Endothelial cell of umbilical vein (primary cell): ENCODE measurements at regions of chr1 and their contacts with region 1.

Region 1: DNA sequence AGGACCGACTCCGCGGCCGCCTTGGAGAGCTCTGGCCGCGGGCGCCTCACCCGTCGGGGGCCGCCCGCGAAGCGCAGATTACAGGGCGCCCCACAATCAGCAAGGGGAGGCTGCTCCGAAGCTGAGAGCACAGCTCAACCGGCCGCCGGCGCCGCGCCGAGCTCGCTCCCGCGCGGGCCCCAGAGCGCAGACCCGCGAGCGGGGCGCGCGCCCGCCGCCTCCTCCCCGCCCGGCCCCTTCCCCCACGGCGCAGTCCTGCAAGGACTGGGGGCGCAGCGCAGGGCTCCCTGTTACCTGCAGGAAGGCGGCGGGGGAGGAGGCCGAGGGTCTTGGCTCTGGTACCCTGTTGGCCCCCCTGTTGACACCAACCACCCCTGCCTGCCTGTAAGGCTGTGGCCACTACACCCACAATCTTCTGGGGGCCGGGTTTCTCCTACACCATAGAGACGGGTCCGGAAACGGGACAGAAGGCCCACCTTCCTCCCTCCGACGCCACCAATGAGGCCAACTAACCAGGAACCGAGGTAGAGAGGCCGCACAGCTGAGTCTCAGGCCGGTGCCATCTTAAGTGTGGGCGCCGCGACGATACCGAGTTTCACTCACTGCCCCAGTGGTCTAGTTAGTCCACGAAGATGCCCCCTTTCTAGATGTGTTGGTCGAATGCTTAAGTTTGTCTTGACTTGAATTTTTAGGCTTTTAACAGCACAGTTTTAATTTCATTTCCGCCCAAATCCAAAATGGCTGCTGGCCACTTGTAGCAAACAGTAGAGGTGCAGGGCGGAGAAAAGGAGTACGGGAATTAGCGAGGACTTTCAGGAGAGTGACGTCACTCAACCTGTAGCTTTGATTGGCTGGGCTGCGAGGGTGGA is at the start of gene SCYL3:
- DNase-seq: peak; percentile 98
- H3K4me3 ChIP-seq: peak within 1 kb of the TSS; percentile 74 to 94 (median 93)
- H3K27ac ChIP-seq: peak within 1 kb of the TSS; percentile 100
- H3K4me1 ChIP-seq: peaks cover 16% of the 10 kb centered on the region
- H3K27me3 ChIP-seq: peaks cover 11 to 19% of the 10 kb centered on the region in 2 experiments
- CTCF ChIP-seq: no peak
- POLR2A ChIP-seq: peak; percentile 68
- total RNA-seq, gene SCYL3: 5.6 and 6.2 TPM in 2 replicates

Region 2: DNA sequence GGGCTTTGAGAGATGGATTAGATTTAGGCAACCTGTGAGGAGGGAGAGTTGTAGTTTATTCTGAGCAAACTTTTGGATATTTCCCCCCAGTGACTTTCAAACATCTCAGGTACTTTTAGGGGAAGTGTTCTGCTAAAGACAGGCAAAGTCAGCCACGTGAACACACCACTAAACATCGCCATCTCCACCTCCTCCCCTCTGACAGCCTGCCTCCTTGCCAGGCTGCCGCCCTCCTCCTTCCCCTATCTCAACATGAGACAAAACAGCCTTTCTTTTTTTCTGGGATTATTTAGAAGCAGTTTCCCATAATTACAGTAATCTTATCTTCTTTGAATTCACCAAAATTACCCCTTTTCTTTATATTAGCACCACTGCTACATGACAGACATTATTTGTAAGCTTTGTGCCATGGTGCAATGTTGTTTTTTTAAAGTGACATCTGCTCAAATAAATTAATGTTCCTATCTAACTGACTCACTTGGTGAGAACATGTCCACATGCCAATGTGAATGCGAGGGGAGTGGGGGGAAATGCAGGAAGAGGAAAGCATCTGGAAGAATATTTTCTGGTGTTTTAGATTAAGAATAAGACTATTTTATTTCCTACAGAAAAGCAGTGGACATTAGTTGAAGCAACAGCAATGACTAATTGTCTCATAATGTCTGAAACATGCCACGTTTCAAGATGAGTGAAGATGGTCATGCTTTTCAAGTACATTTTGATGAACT is 935.0 kb before region 1 on chr1:
- CTCF ChIA-PET with region 1: no interaction called
- POLR2A ChIA-PET with region 1: no interaction called
- dilution Hi-C with region 1: no loop called
- intact Hi-C with region 1: no loop called
- DNase-seq: peak; percentile 10
- H3K4me3 ChIP-seq: no peak overlapping the region
- H3K27ac ChIP-seq: no peak overlapping the region
- H3K4me1 ChIP-seq: peaks cover 6% of the 10 kb centered on the region
- H3K27me3 ChIP-seq: no peaks in the 10 kb centered on the region
- CTCF ChIP-seq: no peak
- POLR2A ChIP-seq: no peak

Region 3: DNA sequence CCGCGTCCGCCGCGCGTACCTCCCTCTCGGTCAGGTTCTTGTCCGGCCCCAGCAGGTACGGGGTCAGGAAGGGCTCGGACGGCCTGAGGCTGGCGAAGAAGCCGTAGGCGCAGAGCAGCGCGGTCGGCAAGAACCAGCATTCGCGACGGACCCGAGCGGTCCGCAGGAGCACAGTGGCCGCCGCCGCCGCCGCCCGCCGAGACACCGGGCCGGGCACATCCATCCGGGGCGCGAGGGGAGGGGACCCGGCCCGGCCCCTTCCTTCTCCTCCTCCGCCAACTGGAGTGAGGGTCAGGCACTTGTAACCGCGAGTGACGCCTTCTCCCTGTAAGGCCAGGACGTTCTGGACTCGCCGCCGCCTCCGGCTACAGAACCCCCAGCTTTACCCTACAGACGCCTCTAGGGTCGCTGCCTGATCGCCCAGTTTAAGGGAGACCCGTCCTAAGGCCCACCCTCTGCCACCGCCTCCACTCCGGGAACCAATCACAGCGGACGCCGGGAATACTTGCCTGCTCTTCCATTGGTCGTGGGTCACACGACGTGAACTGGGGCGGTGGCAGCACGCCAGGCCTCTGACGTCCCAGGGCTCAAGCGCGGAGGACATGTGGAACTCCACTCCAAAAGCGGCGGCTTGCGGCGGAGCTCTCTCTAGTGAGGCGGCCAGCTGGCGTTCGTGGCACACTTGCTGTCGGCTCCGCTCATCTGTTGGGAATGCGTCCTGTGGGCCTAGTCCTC is 408.0 kb before region 1 on chr1 and contains the start of gene SLC19A2:
- CTCF ChIA-PET with region 1: no interaction called
- POLR2A ChIA-PET with region 1: no interaction called
- dilution Hi-C with region 1: no loop called
- intact Hi-C with region 1: loop called (anchors 2 kb)
- DNase-seq: peak; percentile 99
- H3K4me3 ChIP-seq: peak within 1 kb of the TSS; percentile 37 to 80 (median 78)
- H3K27ac ChIP-seq: peak within 1 kb of the TSS; percentile 96
- H3K4me1 ChIP-seq: peaks cover 31% of the 10 kb centered on the region
- H3K27me3 ChIP-seq: no peaks in the 10 kb centered on the region
- CTCF ChIP-seq: peak in 1 of 2 donors; percentile 31
- POLR2A ChIP-seq: peak; percentile 87
- total RNA-seq, gene SLC19A2: 5.4 and 7.0 TPM in 2 replicates

Region 4: DNA sequence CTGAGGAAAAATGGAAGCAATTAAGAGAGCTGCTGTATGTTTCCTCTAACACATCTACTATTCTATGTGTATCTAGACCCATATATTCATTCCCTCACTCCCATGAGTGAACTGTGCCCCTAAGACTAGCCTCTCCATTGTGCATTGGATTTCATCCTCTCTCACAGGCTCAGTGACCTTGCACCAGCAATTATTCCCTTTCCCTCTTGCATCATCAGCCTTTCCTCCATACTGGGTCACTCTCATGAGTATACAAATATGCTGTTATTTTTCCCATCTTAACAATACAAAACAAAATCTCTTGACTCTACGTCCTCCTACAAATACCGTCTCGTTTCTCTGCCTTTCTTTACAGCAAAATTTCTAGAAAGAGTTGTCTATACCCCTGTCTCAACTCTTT is 69.6 kb before region 1 on chr1:
- CTCF ChIA-PET with region 1: no interaction called
- POLR2A ChIA-PET with region 1: no interaction called
- dilution Hi-C with region 1: no loop called
- intact Hi-C with region 1: no loop called
- DNase-seq: no peak
- H3K4me3 ChIP-seq: no peak overlapping the region
- H3K27ac ChIP-seq: no peak overlapping the region
- H3K4me1 ChIP-seq: no peaks in the 10 kb centered on the region
- H3K27me3 ChIP-seq: no peaks in the 10 kb centered on the region
- CTCF ChIP-seq: no peak
- POLR2A ChIP-seq: no peak

Region 5: DNA sequence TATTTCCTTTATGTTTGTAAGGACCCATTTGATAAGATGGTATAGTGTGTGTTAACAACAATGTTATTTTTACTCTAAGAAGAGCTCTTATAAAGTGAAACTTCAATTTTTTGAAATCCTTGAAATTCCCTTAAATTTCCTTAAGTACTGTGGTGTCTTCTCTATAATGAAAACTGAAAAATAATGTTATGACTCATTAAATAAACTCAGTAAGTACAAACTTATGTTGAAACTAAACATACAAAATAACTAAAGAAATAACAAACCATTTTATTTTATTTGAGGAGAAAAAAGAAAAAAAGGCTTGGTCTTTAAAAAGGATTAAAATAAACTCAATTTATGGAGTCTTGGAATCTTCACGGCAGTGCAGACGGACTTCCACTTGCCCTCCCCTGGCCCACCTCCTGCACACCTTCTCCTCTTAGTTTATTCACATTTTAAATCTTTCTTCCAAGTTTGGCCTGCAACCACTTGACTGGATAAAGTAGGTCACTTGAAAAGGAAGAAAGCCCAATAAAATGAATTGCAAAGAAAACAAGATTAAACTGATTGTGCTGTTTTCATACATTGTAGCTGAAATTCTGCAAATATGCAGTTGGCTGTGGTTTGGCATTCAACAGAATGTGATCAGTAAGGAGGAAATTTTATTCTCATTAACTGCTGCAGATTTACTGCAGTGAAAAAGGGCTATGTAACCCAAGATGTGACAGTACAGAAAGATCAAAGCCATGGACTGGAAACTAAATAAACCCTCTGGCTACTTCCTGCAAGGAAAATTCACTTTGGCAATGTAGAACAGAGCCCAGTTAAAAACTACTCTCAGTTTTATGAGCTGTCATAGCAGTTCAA is 48.5 kb after region 1 on chr1:
- CTCF ChIA-PET with region 1: no interaction called
- POLR2A ChIA-PET with region 1: no interaction called
- dilution Hi-C with region 1: no loop called
- intact Hi-C with region 1: loop called (anchors 5 kb)
- DNase-seq: peak; percentile 68
- H3K4me3 ChIP-seq: no peak overlapping the region
- H3K27ac ChIP-seq: no peak overlapping the region
- H3K4me1 ChIP-seq: peaks cover 6% of the 10 kb centered on the region
- H3K27me3 ChIP-seq: no peaks in the 10 kb centered on the region
- CTCF ChIP-seq: no peak
- POLR2A ChIP-seq: no peak

Region 6: DNA sequence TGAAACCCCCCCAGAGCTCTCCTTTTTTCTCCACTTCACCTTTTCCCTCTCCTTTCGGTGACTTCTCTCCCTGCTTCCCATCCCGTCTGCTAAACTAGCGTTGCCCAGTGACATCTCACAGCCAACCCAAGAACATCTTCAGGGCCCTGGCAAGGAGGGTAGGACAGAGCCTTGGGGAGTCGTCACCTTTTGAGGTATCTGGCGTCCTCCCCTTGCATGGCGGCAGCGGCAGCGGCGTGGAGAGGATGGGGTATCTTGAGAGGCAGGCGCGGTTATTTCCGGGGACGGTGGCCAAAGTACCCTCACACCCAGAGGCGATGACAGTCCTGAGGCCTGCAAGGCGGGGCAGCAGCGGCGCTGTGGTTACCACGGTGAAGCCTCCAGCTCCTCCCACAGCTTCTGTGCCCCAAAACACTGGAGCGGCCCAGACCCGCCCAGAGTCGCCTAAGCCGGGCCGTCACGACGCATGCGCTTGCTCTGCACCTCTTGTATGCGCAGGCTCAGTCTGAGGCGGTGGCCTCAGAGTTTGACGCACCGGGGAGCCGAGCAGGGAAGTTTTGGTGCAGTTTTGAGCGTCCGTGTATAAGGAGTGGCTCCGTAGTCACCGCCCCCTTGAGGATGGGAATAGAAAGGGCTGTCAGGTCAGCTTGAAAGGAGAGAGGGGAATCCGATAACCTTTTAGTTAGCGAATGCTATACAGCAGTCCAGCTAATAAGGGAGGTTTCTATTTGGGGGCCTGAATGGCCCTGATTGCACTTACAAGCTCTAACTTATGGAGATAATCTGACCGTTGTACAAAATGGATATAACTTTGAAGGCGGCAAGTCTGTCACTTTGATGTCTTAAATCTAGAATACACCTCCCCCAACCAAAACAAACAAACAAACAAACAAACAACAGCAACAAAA is 180.8 kb after region 1 on chr1 and contains the start of gene KIFAP3:
- CTCF ChIA-PET with region 1: interaction called, 3 read pairs
- POLR2A ChIA-PET with region 1: no interaction called
- dilution Hi-C with region 1: no loop called
- intact Hi-C with region 1: loop called (anchors 1 kb)
- DNase-seq: peak; percentile 98
- H3K4me3 ChIP-seq: peak within 1 kb of the TSS; percentile 41 to 77 (median 65)
- H3K27ac ChIP-seq: peak within 1 kb of the TSS; percentile 2
- H3K4me1 ChIP-seq: peaks cover 7% of the 10 kb centered on the region
- H3K27me3 ChIP-seq: no peaks in the 10 kb centered on the region
- CTCF ChIP-seq: peak; percentile 45 to 57
- POLR2A ChIP-seq: no peak
- total RNA-seq, gene KIFAP3: 17.5 and 19.6 TPM in 2 replicates

Region 7: DNA sequence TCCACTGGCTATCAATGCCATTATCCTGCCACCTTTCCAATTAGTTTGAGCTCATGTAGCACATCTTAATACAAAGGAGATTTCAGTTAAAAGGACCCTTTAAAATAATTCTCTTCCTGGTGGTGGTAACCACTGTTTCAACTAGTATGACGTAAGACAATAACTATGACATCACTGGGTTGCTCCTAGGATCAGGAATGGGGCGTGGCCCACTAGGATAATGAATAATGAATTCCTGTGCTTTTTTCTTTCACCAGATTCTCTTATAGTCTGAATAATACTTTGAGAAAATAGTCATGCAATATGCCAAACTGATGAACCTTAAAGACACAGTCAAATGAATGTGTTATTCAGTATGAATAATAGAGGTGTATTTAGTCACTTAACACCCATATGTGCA is 191.4 kb after region 1 on chr1:
- CTCF ChIA-PET with region 1: no interaction called
- POLR2A ChIA-PET with region 1: no interaction called
- dilution Hi-C with region 1: no loop called
- intact Hi-C with region 1: no loop called
- DNase-seq: no peak
- H3K4me3 ChIP-seq: no peak overlapping the region
- H3K27ac ChIP-seq: no peak overlapping the region
- H3K4me1 ChIP-seq: no peaks in the 10 kb centered on the region
- H3K27me3 ChIP-seq: no peaks in the 10 kb centered on the region
- CTCF ChIP-seq: no peak
- POLR2A ChIP-seq: no peak

Region 8: DNA sequence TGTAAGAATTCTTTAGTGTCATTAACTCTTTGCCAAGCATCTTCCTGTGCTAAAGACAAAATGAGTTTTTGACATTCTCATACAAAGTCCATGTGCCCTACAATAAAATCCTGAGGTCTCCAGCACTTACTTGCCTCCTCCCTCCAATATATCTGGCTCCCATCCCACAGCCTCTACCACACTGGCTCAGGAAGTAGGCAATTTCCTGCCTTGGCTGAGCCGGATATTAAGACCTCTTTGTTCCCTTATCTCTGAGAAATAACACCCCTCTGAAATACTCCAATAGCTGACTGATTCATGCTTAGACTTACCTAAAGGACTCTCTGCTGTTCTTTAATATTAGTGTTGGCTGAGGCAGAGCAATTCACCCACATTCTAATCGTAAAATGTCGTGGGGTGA is 600.6 kb after region 1 on chr1:
- CTCF ChIA-PET with region 1: no interaction called
- POLR2A ChIA-PET with region 1: no interaction called
- dilution Hi-C with region 1: no loop called
- intact Hi-C with region 1: loop called (anchors 5 kb)
- DNase-seq: peak; percentile 91
- H3K4me3 ChIP-seq: peak overlapping the region in 1 of 3 experiments; percentile 10
- H3K27ac ChIP-seq: peak overlapping the region; percentile 33
- H3K4me1 ChIP-seq: peaks cover 20% of the 10 kb centered on the region
- H3K27me3 ChIP-seq: no peaks in the 10 kb centered on the region
- CTCF ChIP-seq: no peak
- POLR2A ChIP-seq: no peak

Region 9: GRCh38 chr1:170531758-170532657 is 638.3 kb after region 1 on chr1 and contains the start of gene GORAB:
- CTCF ChIA-PET with region 1: no interaction called
- POLR2A ChIA-PET with region 1: no interaction called
- dilution Hi-C with region 1: no loop called
- intact Hi-C with region 1: loop called (anchors 5 kb)
- DNase-seq: peak; percentile 94
- H3K4me3 ChIP-seq: peak within 1 kb of the TSS; percentile 50 to 78 (median 65)
- H3K27ac ChIP-seq: peak within 1 kb of the TSS; percentile 87
- H3K4me1 ChIP-seq: peaks cover 14% of the 10 kb centered on the region
- H3K27me3 ChIP-seq: peaks cover 5 to 12% of the 10 kb centered on the region in 2 experiments
- CTCF ChIP-seq: no peak
- POLR2A ChIP-seq: peak; percentile 79
- total RNA-seq, gene GORAB: 6.4 and 7.7 TPM in 2 replicates